HCT116 (cell line): ENCODE measurements at regions of chr22 and their contacts with region 1.

Region 1: DNA sequence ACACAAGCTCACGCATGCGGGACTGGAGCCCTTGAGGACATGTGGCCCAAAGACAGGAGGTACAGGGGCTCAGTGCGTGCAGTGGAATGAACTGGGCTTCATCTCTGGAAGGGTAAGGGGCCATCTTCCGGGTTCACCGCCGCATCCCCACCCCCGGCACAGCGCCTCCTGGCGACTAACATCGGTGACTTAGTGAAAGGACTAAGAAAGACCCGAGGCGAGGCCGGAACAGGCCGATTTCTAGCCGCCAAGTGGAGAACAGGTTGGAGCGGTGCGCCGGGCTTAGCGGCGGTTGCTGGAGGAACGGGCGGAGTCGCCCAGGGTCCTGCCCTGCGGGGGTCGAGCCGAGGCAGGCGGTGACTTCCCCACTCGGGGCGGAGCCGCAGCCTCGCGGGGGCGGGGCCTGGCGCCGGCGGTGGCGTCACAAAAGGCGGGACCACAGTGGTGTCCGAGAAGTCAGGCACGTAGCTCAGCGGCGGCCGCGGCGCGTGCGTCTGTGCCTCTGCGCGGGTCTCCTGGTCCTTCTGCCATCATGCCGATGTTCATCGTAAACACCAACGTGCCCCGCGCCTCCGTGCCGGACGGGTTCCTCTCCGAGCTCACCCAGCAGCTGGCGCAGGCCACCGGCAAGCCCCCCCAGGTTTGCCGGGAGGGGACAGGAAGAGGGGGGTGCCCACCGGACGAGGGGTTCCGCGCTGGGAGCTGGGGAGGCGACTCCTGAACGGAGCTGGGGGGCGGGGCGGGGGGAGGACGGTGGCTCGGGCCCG is at the start of gene MIF:
- DNase-seq: peak; percentile 80
- ATAC-seq: peak; percentile 84
- H3K4me3 ChIP-seq: peak within 1 kb of the TSS; percentile 92
- H3K27ac ChIP-seq: peak within 1 kb of the TSS; percentile 91
- H3K4me1 ChIP-seq: peaks cover 17 to 32% of the 10 kb centered on the region in 2 experiments
- H3K27me3 ChIP-seq: no peaks in the 10 kb centered on the region
- CTCF ChIP-seq: peak; percentile 64 to 90 (median 82)
- POLR2A ChIP-seq: peak; percentile 67
- RAD21 ChIP-seq: no peak; the same call in 1 of the 2 replicates
- total RNA-seq, gene MIF: 1,511 TPM

Region 2: DNA sequence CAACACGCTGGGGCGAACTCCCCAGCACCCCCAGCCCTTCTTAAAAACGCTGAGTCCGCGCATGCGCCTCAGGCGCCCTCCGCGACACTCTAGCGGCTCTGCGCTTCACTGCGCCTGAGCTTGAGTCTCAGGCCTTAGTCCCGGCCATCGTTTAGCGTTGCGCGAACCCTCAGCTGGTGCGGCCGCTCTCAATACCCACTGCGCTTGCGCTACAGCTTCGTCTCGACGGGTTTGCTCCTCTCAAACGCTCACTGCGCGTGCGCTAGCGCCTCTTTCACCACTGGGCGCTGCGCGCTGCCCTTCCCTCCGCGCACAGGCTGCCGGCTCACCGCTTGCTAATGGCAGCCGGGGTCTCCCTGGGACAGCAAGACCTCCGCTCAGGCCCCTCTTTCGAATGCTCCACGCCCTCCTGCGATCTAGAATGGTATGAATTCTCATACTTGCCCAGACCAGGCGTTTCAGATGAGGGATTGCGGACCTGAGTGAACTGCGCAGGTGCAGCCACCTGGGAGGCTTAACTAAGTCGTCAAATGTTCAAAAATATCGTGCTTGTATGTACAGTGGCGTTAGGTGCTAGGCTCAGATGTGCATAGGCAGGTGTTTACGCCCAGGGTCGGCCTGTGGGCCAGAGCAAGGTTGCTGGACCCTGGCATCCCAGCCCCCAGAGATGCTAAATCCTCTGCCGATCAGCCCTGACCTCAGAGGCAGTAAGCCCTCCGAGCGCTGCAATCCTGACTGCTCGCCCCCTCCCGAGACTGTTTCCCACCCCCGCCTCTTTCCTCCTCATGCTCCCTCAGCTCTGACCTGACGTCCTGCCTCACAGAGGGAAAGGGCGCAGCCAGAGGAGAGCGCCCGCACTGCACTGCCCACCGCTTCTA is 36.3 kb before region 1 on chr22 and contains the start of gene SLC2A11:
- CTCF ChIA-PET with region 1: interaction called, 15 read pairs
- POLR2A ChIA-PET with region 1: interaction called, 11 read pairs
- RAD21 ChIA-PET with region 1: interaction called in 1 of 2 experiments, 3 read pairs
- intact Hi-C with region 1: loop called (anchors 5 kb)
- DNase-seq: peak; percentile 92
- ATAC-seq: peak; percentile 96
- H3K4me3 ChIP-seq: peak within 1 kb of the TSS; percentile 74 to 80
- H3K27ac ChIP-seq: peak within 1 kb of the TSS; percentile 71
- H3K4me1 ChIP-seq: peaks cover 4 to 13% of the 10 kb centered on the region in 2 experiments; a peak in 2 of 4 replicates
- H3K27me3 ChIP-seq: no peaks in the 10 kb centered on the region
- CTCF ChIP-seq: peak in 1 of 3 experiments; percentile 9; a peak in 2 of 6 replicates
- POLR2A ChIP-seq: peak; percentile 97
- RAD21 ChIP-seq: no peak
- total RNA-seq, gene SLC2A11: 17.2 TPM

Region 3: GRCh38 chr22:23913661-23914353 is 19.7 kb after region 1 on chr22:
- CTCF ChIA-PET with region 1: interaction called, 21 read pairs
- POLR2A ChIA-PET with region 1: interaction called, 23 read pairs
- RAD21 ChIA-PET with region 1: no interaction called
- intact Hi-C with region 1: no loop called
- DNase-seq: peak; percentile 98
- ATAC-seq: peak; percentile 99
- H3K4me3 ChIP-seq: peak overlapping the region; percentile 73 to 86
- H3K27ac ChIP-seq: peak overlapping the region; percentile 84
- H3K4me1 ChIP-seq: peaks cover 0 to 16% of the 10 kb centered on the region in 2 experiments; a peak in 3 of 4 replicates
- H3K27me3 ChIP-seq: no peaks in the 10 kb centered on the region
- CTCF ChIP-seq: no peak
- POLR2A ChIP-seq: peak; percentile 96
- RAD21 ChIP-seq: no peak

Region 4: GRCh38 chr22:24076091-24076867 is 182.2 kb after region 1 on chr22:
- CTCF ChIA-PET with region 1: no interaction called
- POLR2A ChIA-PET with region 1: no interaction called
- RAD21 ChIA-PET with region 1: no interaction called
- intact Hi-C with region 1: no loop called
- DNase-seq: no peak
- ATAC-seq: no peak
- H3K4me3 ChIP-seq: no peak overlapping the region
- H3K27ac ChIP-seq: no peak overlapping the region
- H3K4me1 ChIP-seq: no peaks in the 10 kb centered on the region
- H3K27me3 ChIP-seq: no peaks in the 10 kb centered on the region
- CTCF ChIP-seq: no peak
- POLR2A ChIP-seq: no peak
- RAD21 ChIP-seq: no peak